Activated T-helper 2 cell treated with anti-CD3 and anti-CD28 coated beads, Interferon-gamma antibody, Interleukin-2, Interleukin-4, amounts not matched to agents 10 μg/mL and 5 μg/mL and 100 μg/mL, durations not matched to agents 14 hours and 24 hours and 36 hours (primary cell): ENCODE measurements at regions of chr11 and their contacts with region 1.

Region 1: DNA sequence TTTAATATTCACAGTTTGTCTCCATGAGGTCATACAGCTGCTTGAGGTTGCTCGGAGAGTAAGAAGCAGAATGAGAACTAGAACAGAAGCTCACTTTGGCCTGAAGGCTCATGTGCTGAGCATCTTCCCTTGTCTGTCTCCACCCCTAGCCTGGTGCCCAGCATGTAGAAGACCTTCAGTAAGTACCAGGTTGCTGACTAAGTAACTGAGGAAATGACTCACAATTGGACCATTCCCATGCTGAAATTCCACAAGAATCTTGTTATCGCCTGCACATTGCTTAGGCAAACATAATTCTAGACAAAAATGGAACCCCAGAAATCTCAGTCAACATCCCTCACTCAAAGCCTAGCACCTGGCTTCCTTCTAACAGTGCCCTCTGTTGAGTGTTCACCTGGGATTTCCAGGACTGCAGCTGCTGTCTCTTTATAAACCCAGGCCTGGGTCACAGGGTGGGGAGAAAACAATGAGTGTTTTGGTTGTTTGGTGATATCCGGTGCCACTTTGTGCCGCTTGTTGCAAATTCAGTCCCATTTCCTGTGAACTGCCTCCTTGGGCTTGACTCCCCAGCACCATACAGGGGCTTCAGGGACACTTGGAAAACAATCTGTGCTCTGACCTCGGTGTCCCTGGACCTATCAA is 406.8 kb downstream of the ETS1 start:
- DNase-seq: no peak
- H3K4me3 Mint-ChIP-seq: no peak overlapping the region
- H3K27ac Mint-ChIP-seq: peak overlapping the region; percentile 44
- H3K4me1 Mint-ChIP-seq: peaks cover 61% of the 10 kb centered on the region
- H3K27me3 Mint-ChIP-seq: no peaks in the 10 kb centered on the region

Region 2: DNA sequence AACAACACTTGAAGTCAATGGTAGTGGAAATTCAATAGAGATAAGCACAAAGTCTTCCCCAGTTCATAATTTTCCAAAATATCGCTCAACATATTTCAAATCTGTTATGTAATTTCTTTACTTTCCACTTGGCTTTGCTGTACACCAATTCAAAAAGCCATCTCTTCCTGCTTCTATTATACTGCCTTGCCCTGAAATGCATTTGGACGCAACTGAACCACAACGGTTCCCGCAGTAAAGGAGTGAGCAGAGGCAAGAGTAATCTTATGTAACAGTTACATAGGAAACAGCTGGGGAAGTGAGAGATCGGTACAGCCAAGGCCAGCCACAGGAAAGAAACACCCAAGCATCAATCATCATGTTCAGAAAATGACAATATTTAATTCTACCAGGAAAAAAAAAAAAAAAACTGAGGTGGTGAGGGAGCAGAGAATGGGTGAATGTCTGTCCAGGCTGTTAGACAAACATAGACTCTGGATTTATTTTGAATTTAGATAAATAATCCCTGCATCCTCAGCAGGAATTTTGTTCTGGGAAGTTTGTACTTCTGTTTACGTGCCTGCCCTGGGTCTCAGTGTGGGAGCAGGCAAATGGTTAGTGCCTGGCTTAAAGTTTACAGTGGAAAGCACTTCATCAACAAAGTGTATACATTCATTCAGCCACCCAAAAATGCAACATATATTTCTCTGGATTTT is 14.6 kb after region 1 on chr11:
- intact Hi-C with region 1: loop called (anchors 1 kb)
- DNase-seq: peak; percentile 26
- H3K4me3 Mint-ChIP-seq: no peak overlapping the region
- H3K27ac Mint-ChIP-seq: peak overlapping the region; percentile 29
- H3K4me1 Mint-ChIP-seq: peaks cover 42% of the 10 kb centered on the region
- H3K27me3 Mint-ChIP-seq: peaks cover 1% of the 10 kb centered on the region

Region 3: DNA sequence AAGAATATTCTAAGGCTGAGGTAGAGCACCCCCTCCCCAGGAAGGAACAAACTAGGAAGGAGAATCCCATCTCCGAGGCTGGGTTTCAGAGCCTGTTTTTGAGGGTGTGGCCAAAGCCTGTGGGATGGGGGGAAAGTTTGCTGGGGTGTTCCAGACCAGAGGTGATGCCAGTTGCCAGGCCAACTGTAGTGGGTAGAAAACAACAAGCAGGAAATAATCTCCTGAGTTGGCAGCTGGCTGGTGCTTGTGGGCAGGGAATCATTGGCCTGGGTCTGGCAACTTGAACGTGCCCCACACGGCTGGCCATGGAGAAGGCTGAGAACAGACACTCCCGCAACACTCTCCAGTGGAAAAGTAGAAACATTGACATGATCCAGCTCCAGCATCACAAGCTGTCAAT is 21.2 kb after region 1 on chr11:
- intact Hi-C with region 1: loop called (anchors 2 kb)
- DNase-seq: no peak
- H3K4me3 Mint-ChIP-seq: no peak overlapping the region
- H3K27ac Mint-ChIP-seq: peak overlapping the region; percentile 43
- H3K4me1 Mint-ChIP-seq: peaks cover 33% of the 10 kb centered on the region
- H3K27me3 Mint-ChIP-seq: no peaks in the 10 kb centered on the region

Region 4: GRCh38 chr11:128328955-128329551 is 148.5 kb after region 1 on chr11:
- intact Hi-C with region 1: loop called (anchors 5 kb)
- DNase-seq: no peak
- H3K4me3 Mint-ChIP-seq: peak overlapping the region; percentile 19
- H3K27ac Mint-ChIP-seq: peak overlapping the region; percentile 94
- H3K4me1 Mint-ChIP-seq: peaks cover 72% of the 10 kb centered on the region
- H3K27me3 Mint-ChIP-seq: no peaks in the 10 kb centered on the region